Natural killer cell (primary cell): ENCODE measurements at regions of chr22 and their contacts with region 1.

Region 1: DNA sequence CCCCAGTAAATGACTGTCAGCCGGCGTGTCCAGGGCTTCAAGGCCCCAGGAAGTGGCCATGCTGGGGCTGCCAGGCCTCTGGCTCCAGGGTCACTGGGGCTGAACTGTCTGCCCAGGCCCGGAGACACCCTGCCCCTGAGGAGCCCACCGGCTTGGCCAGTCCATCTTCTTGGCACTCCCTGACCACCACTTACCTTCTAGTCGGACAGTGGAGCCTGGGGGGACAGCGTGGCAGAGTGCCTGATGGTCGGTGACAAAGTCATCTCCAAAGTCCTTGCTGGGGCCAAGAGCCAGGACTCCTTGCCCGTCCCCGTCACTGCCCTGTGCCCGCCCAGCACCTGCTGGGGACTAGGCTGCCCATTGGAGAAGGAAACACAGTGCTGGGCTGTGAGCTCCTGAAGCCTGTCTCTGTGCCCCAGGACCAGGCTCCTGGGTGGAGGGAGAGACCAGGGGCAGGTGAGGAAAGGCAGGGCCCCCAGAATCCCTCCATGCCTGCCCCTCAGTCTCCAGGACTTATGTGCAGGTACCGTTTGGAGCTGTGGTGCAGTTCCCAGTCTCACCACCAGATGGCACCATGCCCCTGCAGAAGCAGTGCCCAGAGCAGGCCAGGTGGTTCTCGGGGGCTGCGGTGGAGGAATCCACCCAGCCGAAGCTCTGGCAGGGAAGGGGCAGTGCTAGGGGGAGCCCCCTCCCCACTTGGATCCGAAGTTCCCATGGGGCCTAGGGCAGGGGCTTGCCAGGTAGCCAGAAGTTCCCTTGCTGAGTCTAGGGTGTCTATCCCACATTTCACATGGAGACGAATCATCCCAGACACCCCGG is 6.0 kb upstream of the CCDC188 start:
- DNase-seq: peak; percentile 89 to 93
- ATAC-seq: peak; percentile 82 to 95 (median 90)
- H3K4me3 ChIP-seq: no peak overlapping the region
- H3K4me3 Mint-ChIP-seq: no peak overlapping the region
- H3K27ac ChIP-seq: no peak overlapping the region
- H3K27ac Mint-ChIP-seq: no peak overlapping the region
- H3K4me1 ChIP-seq: peaks cover 21% of the 10 kb centered on the region
- H3K4me1 Mint-ChIP-seq: peaks cover 0 to 4% of the 10 kb centered on the region in 2 donors
- H3K27me3 ChIP-seq: peaks cover 4% of the 10 kb centered on the region
- H3K27me3 Mint-ChIP-seq: peaks cover 0 to 4% of the 10 kb centered on the region in 2 donors
- CTCF ChIP-seq: peak; percentile 95

Region 2: GRCh38 chr22:20116951-20117645 is 39.7 kb before region 1 on chr22 and contains the start of gene TRMT2A:
- intact Hi-C with region 1: no loop called
- DNase-seq: peak; percentile 97 to 99
- ATAC-seq: peak; percentile 82 to 92 (median 83)
- H3K4me3 ChIP-seq: peak within 1 kb of the TSS; percentile 75
- H3K4me3 Mint-ChIP-seq: peak within 1 kb of the TSS; percentile 92
- H3K27ac ChIP-seq: peak within 1 kb of the TSS; percentile 79
- H3K27ac Mint-ChIP-seq: peak within 1 kb of the TSS; percentile 84 to 93
- H3K4me1 ChIP-seq: peaks cover 70% of the 10 kb centered on the region
- H3K4me1 Mint-ChIP-seq: peaks cover 23 to 45% of the 10 kb centered on the region in 2 donors
- H3K27me3 ChIP-seq: no peaks in the 10 kb centered on the region
- H3K27me3 Mint-ChIP-seq: no peaks in the 10 kb centered on the region
- CTCF ChIP-seq: no peak
- total RNA-seq, gene TRMT2A: 86.4 to 104 (median 86.5) TPM

Region 3: DNA sequence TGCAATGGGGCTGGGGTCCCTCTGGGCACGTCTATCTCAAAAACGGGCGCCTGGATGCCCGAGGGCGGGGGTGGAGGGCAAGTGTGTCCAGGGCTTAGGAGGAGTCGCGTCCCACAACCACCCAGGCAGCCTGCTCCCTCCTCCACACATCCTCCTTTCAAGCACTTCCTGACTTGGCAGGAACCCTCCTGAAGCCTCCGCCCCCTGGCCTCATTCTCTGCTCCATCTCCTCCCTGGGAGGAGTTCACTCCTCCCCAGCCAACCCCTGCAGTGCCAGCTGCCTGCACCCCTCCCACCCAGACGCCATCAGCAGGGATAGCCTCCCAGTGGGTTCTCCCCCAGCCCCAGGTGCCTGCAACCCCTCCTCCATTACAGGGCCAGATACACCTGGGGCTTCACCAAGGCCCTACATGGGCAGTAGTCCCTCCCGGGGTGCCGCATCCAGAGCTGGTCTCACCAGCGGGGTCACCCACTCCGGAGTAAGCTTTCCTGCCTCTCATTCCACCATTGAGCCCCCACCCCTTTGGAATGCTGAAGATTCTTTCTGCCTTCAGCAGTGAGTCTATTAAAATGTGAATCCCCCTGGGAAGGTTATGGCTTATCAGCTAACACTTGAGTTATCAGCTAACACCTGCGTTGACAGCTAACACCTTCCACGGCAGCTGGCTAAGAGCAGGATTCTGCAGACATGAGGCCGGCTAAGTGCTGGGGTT is 86.9 kb after region 1 on chr22:
- intact Hi-C with region 1: no loop called
- DNase-seq: peak in 1 of 2 donors; percentile 77
- ATAC-seq: no peak
- H3K4me3 ChIP-seq: no peak overlapping the region
- H3K4me3 Mint-ChIP-seq: peak overlapping the region; percentile 73
- H3K27ac ChIP-seq: peak overlapping the region; percentile 80
- H3K27ac Mint-ChIP-seq: peak overlapping the region in 1 of 2 donors; percentile 90
- H3K4me1 ChIP-seq: peaks cover 85% of the 10 kb centered on the region
- H3K4me1 Mint-ChIP-seq: peaks cover 22 to 52% of the 10 kb centered on the region in 2 donors
- H3K27me3 ChIP-seq: no peaks in the 10 kb centered on the region
- H3K27me3 Mint-ChIP-seq: no peaks in the 10 kb centered on the region
- CTCF ChIP-seq: no peak

Region 4: GRCh38 chr22:20268279-20269012 is 111.6 kb after region 1 on chr22 and contains the start of gene RTN4R:
- intact Hi-C with region 1: loop called (anchors 1 kb)
- DNase-seq: peak; percentile 67 to 77
- ATAC-seq: peak; percentile 73 to 94 (median 94)
- H3K4me3 ChIP-seq: no peak within 1 kb of the TSS
- H3K4me3 Mint-ChIP-seq: peak within 1 kb of the TSS; percentile 82
- H3K27ac ChIP-seq: no peak within 1 kb of the TSS
- H3K27ac Mint-ChIP-seq: peak within 1 kb of the TSS in 1 of 2 donors; percentile 47
- H3K4me1 ChIP-seq: peaks cover 24% of the 10 kb centered on the region
- H3K4me1 Mint-ChIP-seq: peaks cover 6 to 16% of the 10 kb centered on the region in 2 donors
- H3K27me3 ChIP-seq: peaks cover 4% of the 10 kb centered on the region
- H3K27me3 Mint-ChIP-seq: no peaks in the 10 kb centered on the region
- CTCF ChIP-seq: peak; percentile 62
- total RNA-seq, gene RTN4R: 1.2 to 2.9 (median 1.6) TPM

Region 5: GRCh38 chr22:20284471-20285086 is 127.8 kb after region 1 on chr22:
- intact Hi-C with region 1: loop called (anchors 1 kb)
- DNase-seq: no peak
- ATAC-seq: no peak
- H3K4me3 ChIP-seq: no peak overlapping the region
- H3K4me3 Mint-ChIP-seq: no peak overlapping the region
- H3K27ac ChIP-seq: no peak overlapping the region
- H3K27ac Mint-ChIP-seq: peak overlapping the region in 1 of 2 donors; percentile 51
- H3K4me1 ChIP-seq: no peaks in the 10 kb centered on the region
- H3K4me1 Mint-ChIP-seq: no peaks in the 10 kb centered on the region
- H3K27me3 ChIP-seq: no peaks in the 10 kb centered on the region
- H3K27me3 Mint-ChIP-seq: no peaks in the 10 kb centered on the region
- CTCF ChIP-seq: no peak

Region 6: GRCh38 chr22:20456064-20456721 is 299.4 kb after region 1 on chr22:
- intact Hi-C with region 1: loop called (anchors 5 kb)
- DNase-seq: peak; percentile 58 to 90
- ATAC-seq: peak; percentile 89 to 100 (median 99)
- H3K4me3 ChIP-seq: no peak overlapping the region
- H3K4me3 Mint-ChIP-seq: no peak overlapping the region
- H3K27ac ChIP-seq: no peak overlapping the region
- H3K27ac Mint-ChIP-seq: no peak overlapping the region
- H3K4me1 ChIP-seq: peaks cover 9% of the 10 kb centered on the region
- H3K4me1 Mint-ChIP-seq: peaks cover 10% of the 10 kb centered on the region in 2 donors
- H3K27me3 ChIP-seq: no peaks in the 10 kb centered on the region
- H3K27me3 Mint-ChIP-seq: no peaks in the 10 kb centered on the region
- CTCF ChIP-seq: peak; percentile 76